ENCODE measurements at regions of chr7 and their contacts with region 1.

Region 1: GRCh38 chr7:94509879-94510581 is 421 bp downstream of the CASD1 start:
- DNase-seq: peak; percentile 91

Region 2: GRCh38 chr7:94289071-94289470 is 221.0 kb before region 1 on chr7:
- intact Hi-C with region 1: no loop called
- DNase-seq: no peak

Region 3: DNA sequence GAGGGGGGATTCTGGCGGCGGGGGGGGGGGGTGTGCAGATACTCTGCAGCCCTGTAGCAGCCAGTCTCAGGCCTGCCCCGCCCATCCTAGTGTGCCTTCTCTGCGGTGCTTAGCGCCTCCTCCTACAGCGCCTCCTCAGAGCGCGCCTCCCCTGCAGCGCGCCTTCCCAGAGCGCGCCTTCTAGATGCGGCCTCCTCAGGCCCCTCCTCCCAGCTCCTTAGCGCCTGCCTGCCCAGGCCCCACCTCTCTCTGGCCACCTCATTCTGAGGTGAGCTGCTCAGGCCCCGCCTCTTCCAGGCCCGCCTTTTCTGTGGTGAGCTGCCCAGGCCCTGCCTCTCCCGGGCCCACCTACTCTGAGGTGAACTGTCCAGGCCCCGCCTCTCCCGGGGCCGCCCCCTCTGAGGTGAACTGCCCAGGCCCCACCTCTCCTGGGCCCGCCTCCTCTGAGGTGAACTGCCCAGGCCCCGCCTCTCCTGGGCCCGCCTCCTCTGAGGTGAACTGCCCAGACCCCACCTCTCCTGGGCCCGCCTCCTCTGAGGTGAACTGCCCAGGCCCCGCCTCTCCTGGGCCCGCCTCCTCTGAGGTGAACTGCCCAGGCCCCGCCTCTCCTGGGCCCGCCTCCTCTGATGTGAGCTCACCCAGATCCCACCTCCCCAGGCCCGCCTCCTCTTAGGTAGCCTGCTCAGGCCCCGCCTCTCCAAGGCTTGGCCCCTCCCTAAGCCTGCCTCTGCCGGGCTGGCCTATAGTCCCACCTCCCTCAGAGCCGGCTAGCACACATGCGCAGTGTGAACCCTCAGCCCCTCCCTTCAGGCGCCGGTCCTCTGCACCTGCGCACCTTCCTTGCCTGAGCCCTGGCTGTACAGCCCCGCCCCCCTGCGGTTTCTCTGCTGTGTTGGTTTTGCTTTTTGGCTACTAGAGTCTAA is 148.0 kb after region 1 on chr7:
- intact Hi-C with region 1: loop called (anchors 5 kb)
- DNase-seq: peak; percentile 96